Posterior vena cava (tissue), 2 donors: ENCODE measurements at regions of chr1 and their contacts with region 1.

Region 1: DNA sequence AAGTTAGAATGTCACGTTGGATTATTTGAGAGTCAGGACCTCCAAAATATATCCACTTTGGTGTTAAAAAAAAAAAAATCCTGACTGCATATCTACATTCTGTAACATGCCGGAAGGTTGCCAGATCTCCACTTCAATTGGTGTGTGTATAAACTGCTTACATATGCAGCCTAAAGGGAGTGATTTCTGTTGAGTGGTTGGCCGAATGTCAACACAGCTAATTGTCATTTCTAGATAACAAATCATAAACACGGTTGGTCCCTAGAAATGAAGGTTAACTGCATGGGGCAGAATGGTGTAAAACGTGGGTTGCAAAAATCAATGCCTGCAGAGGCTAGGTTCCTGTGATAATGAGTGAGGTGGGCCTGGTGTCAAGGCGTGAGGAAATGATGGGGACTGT is 15.0 kb upstream of the ROR1 start:
- DNase-seq: no peak

Region 2: DNA sequence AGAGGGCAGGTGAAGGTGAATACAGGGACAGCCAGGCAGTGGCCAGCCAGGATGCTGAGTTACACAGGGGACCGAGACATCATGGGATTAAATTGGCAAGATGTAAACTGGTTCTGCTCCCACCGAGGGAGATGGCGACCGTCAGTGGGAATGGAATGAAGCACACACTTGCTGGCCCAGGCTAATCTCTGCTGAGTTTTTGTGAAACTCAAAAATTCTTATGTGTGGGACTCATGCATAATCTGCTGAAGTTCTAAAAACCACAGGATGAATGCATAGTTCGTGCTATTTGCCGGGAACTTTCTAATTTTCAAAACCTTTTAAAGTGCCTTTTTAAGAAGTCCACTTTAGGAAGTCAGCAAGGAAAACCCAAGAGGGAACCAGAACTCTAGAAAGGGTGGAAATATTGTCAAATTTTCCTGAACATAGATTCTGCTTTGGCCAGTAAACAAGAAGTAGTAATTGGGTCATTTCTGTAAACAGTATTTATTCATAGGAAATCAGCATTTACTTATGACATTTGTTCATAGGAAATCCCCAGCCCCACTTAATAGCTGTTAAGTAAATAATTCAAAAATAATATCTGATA is 70.4 kb before region 1 on chr1:
- intact Hi-C with region 1: no loop called
- DNase-seq: no peak

Region 3: DNA sequence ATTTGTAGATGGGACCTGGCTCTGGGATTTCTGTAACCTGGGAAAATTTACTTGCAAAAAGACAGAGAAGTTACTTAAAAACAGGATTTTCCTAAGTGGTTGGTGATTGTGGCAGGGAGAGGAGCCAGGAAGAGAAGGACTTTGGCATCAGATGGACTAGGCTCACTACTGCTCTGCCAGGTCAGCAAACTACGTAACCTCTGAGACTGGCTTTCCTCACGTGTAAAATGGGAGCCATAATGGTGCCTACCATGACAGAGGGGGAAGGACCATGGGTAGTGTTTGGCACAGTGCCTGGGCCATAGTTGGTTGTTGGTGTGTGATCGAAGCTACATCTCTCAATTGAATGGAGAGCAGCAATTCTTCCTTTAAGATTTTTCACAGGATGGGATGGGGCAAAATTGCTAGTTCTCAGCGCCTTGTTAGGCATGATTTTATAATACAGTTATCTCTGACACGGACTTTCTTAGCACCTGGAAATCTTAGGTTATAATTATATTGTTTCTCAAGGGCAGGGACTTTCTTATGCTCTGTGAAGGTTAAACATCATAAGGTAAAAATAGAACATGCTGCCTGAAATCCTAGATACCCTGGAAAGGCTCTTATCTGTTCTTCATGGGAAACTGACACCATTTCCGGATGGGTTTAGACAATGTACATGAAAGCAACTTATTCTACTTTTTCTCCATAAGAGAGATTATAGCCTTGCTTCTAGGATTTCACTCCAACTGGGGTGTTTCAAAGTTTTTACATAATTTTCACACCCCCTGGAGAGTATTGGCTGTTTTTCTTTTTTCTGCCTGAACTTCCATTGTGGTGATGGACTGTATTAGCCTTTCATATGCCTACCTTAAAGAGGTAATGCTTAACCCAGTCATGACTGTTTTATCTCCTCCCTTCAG is 25.9 kb after region 1 on chr1:
- intact Hi-C with region 1: loop called in 1 of 2 experiments (anchors 2 kb)
- DNase-seq: no peak

Region 4: GRCh38 chr1:63984257-63984929 is 225.6 kb after region 1 on chr1:
- intact Hi-C with region 1: no loop called
- DNase-seq: no peak